SK-MEL-5 (cell line): ENCODE measurements at regions of chr2 and their contacts with region 1.

Region 1: DNA sequence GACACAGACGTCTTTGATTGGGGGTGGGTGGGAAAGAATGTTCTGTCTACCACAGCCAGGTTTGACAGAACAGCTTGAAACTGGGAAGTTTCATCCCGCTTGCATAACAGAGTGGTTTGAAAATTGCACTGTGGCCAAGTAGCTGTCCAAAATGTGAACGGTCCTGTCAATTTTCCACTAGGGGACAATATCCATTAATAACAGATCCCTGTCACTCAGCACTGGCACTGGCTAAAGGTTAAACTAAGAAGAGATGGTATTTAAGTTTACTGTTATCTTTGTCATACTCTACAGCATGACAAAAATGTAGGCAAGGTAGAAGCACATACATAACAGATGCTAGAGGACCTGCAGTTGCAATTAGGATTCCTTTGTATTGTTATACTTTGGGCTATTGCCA is 55.6 kb upstream of the ACMSD start:
- DNase-seq: no peak

Region 2: DNA sequence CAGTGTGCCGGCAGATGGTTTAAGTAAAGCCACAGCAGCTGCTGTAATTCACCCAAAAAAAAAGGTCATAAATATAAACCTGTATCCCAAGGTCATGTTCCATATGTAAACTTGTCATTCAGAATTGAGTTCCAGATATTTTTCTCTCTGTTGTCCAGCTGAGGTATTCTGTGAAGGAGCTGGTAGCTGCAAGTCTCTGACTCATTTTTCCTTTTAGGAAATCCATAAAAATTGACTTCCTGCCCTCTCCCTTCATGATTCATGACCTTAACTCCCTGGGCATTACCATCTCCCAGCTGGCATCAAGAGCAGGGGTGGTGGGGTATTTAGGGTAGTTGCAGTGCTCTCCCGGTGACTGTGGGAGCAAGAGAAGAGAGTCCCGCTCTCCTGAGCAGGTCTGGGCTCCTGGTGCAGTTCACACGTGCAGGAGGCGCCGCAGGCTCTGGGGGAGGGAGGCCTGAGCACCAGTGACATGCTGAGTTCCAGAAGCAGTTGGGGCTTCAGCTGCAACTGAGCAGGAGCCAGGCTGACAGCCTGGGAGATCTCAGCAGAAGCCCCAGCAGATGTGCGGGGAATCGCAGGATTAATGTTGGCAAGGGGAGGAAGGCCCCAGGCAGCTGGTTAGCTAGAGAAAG is 336.3 kb before region 1 on chr2:
- in situ Hi-C with region 1: loop called (anchors 25 kb)
- DNase-seq: no peak